MCF 10A (cell line): ENCODE measurements at regions of chr16 and their contacts with region 1.

Region 1: GRCh38 chr16:67841764-67842508 is at the start of gene THAP11:
- DNase-seq: peak; percentile 97
- H3K4me3 Mint-ChIP-seq: peak within 1 kb of the TSS; percentile 84
- H3K27ac Mint-ChIP-seq: peak within 1 kb of the TSS; percentile 86
- H3K4me1 Mint-ChIP-seq: peaks cover 16% of the 10 kb centered on the region
- H3K27me3 Mint-ChIP-seq: no peaks in the 10 kb centered on the region
- CTCF ChIP-seq: peak; percentile 85
- total RNA-seq, gene THAP11: 18.3 and 20.5 TPM in 2 replicates

Region 2: DNA sequence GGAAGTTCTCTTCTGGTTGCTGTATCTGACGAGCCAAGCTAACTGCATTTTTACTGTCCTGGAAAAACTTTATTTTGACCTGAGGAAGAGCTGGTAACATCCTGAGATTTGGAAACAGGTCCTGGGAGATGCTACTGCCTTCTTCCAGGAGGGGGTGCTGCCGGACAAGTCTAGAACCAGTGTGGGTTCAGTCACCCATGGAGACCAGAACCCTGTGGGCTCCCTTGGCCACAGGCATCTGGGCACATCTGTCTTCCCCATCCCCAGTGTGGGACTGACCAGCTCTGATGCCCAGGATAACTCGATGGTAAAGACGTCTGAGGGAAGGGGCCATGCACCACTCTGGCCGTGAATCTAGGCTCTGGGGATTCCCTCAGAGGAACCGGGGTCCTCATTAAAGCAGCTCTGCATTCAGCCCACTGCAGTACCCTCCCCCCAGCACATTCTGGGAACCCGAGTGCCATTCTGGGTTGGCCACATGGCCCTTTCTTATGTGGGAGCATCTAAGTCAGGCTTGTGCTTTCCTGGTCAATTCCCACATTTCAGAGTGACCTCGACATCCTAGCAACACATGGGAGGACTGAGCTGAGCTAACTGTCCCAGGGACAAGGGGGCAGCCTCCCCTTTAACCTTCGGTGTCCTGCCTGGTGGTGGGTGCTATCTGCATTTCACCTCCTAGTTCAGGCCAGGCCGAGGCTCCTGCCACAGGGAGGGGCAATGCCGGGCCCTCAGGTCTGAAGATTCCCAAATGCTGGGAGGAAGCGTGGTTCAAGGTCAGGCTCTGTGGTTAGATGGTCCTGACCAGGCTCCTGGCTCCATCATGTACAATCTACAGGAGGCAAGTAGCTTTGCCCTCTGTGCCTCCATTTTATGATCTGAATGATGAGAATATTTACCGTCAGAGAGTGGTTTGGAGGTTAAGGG is 168.9 kb before region 1 on chr16:
- CTCF ChIA-PET with region 1: interaction called, 3 read pairs
- POLR2A ChIA-PET with region 1: no interaction called
- intact Hi-C with region 1: loop called (anchors 10 kb)
- DNase-seq: peak; percentile 83
- H3K4me3 Mint-ChIP-seq: no peak overlapping the region
- H3K27ac Mint-ChIP-seq: peak overlapping the region; percentile 73
- H3K4me1 Mint-ChIP-seq: peaks cover 15% of the 10 kb centered on the region
- H3K27me3 Mint-ChIP-seq: no peaks in the 10 kb centered on the region
- CTCF ChIP-seq: peak; percentile 68

Region 3: GRCh38 chr16:67760206-67760955 is 81.6 kb before region 1 on chr16:
- CTCF ChIA-PET with region 1: no interaction called
- POLR2A ChIA-PET with region 1: no interaction called
- intact Hi-C with region 1: no loop called
- DNase-seq: no peak
- H3K4me3 Mint-ChIP-seq: no peak overlapping the region
- H3K27ac Mint-ChIP-seq: no peak overlapping the region
- H3K4me1 Mint-ChIP-seq: peaks cover 7% of the 10 kb centered on the region
- H3K27me3 Mint-ChIP-seq: no peaks in the 10 kb centered on the region
- CTCF ChIP-seq: no peak

Region 4: DNA sequence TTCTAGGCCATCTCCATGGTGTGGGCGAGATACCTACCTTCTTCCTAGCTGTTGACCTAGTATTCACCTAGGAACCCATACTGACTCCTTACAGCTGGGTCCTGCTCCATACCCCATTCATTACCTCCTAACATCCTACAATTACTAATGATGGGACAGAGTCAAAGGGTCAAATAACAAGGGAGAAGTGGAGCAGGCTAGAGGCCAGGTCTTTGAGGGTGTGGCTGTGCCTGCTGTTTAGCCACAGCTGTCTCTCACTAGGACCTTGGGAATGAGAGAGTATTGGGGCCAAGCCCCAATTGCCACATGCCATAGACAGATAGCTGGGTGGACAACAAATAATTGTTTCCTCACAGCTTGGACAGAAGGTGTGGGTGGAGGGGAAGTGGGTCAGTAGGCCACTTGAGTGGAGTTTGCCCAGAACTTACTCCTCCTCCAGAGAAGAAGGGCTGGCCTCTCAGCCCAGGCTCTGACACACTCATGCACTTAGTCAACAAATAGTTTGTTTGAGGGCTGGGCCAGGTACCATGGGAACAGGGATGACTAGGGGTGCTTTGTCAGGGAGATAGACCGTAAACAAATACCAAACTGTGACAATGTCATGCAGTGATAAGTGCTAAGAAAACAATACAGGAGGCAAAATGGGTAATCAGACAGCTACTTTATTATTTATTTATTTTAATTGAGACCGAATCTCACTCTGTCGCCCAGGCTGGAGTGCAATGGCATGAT is 15.7 kb after region 1 on chr16:
- CTCF ChIA-PET with region 1: interaction called, 20 read pairs
- POLR2A ChIA-PET with region 1: interaction called, 141 read pairs
- intact Hi-C with region 1: loop called (anchors 1 kb)
- DNase-seq: peak; percentile 90
- H3K4me3 Mint-ChIP-seq: peak overlapping the region; percentile 54
- H3K27ac Mint-ChIP-seq: peak overlapping the region; percentile 99
- H3K4me1 Mint-ChIP-seq: peaks cover 38% of the 10 kb centered on the region
- H3K27me3 Mint-ChIP-seq: no peaks in the 10 kb centered on the region
- CTCF ChIP-seq: no peak

Region 5: DNA sequence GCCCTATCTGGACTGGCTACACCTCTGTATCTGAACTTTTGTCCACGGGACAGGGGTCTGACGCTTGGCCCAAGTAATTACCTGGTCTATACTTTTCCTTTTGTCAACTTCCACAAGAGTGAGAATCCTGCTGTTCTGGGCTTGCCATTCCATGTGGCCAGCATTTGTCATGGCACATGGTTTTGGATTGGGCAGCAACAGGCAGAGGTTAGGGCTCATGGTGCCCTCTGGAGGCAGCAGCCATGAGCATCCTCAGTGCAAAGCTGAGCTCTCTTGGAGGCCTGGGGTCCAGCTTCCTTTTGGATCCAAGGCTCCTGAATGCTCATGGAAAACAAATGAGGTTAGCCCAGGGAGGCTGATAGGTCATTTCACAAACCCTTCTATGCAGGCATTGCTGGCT is 23.4 kb after region 1 on chr16:
- CTCF ChIA-PET with region 1: interaction called, 20 read pairs
- POLR2A ChIA-PET with region 1: interaction called, 141 read pairs
- intact Hi-C with region 1: loop called (anchors 1 kb)
- DNase-seq: peak; percentile 63
- H3K4me3 Mint-ChIP-seq: no peak overlapping the region
- H3K27ac Mint-ChIP-seq: peak overlapping the region; percentile 96
- H3K4me1 Mint-ChIP-seq: peaks cover 27% of the 10 kb centered on the region
- H3K27me3 Mint-ChIP-seq: no peaks in the 10 kb centered on the region
- CTCF ChIP-seq: peak; percentile 39

Region 6: GRCh38 chr16:67872786-67873537 is 31.0 kb after region 1 on chr16 and contains the start of gene EDC4:
- CTCF ChIA-PET with region 1: interaction called, 17 read pairs
- POLR2A ChIA-PET with region 1: interaction called, 27 read pairs
- intact Hi-C with region 1: no loop called
- DNase-seq: peak; percentile 71
- H3K4me3 Mint-ChIP-seq: peak within 1 kb of the TSS; percentile 89
- H3K27ac Mint-ChIP-seq: peak within 1 kb of the TSS; percentile 94
- H3K4me1 Mint-ChIP-seq: peaks cover 34% of the 10 kb centered on the region
- H3K27me3 Mint-ChIP-seq: no peaks in the 10 kb centered on the region
- CTCF ChIP-seq: no peak
- total RNA-seq, gene EDC4: 50.9 and 51.3 TPM in 2 replicates

Region 7: DNA sequence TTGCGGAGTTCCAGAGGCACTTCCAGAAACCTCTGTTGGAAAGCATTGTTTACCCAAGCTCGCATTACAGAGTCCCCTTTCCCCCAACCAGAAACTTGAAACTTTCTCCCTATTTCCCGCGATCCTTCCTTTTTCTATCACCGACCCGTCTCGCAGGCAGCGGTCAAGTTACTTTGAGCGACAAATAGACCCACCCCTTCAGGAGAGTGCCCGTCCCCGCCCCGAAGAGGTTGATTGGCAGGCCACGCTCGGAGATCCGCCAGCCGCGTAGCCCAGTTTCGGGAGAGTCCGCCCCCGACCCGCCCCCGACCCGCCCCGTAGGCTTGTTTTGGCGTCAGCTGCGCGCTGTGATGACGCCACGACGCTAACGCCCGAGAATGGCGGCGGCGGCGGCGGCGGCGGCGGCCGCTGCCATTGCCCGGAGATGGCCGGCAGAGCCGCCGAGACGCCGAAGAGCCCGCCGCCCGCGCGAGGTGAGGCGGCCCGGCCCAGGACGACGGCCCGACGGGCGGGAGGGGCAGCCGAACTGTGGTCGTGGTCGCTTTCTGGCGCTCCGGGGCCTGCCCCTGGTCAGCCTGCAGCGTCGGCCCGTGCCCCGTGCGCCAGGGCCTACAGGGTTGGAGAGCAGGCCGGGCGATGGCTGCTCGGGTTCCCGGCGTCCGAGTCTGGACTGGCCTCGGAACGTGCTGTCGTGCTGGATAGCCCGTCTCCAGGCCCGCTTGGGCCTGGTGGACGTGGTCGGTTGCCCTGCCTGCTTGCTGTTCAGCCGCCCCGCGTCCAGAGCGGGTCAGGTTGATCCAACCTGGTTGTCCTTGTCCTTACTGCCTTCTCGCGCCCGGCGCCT is 51.2 kb after region 1 on chr16 and contains the start of gene PSKH1:
- CTCF ChIA-PET with region 1: interaction called, 4 read pairs
- POLR2A ChIA-PET with region 1: interaction called, 34 read pairs
- intact Hi-C with region 1: no loop called
- DNase-seq: peak; percentile 96
- H3K4me3 Mint-ChIP-seq: peak within 1 kb of the TSS; percentile 92
- H3K27ac Mint-ChIP-seq: peak within 1 kb of the TSS; percentile 92
- H3K4me1 Mint-ChIP-seq: peaks cover 13% of the 10 kb centered on the region
- H3K27me3 Mint-ChIP-seq: no peaks in the 10 kb centered on the region
- CTCF ChIP-seq: no peak
- total RNA-seq, gene PSKH1: 21.7 and 27.9 TPM in 2 replicates

Region 8: DNA sequence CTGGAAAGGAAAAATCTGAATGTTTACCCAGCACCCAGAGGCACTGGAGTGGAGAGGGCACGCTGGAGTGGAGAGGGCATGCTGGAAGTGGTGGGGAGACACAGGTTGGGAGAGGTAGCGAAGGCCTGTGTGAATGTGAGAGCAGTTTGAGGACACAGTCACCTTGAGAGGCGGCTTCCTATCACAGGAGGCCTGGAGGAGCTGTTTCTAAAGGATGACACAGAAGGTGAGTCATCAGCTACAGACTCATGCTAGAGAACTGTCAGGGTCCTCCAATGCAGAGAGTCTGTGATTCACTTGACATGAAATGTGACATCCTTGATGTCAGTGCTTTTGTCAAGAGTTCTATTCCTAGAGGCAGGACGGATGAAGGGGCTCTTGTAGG is 75.9 kb after region 1 on chr16:
- CTCF ChIA-PET with region 1: interaction called, 3 read pairs
- POLR2A ChIA-PET with region 1: interaction called, 4 read pairs
- intact Hi-C with region 1: loop called (anchors 5 kb)
- DNase-seq: peak; percentile 81
- H3K4me3 Mint-ChIP-seq: no peak overlapping the region
- H3K27ac Mint-ChIP-seq: peak overlapping the region; percentile 65
- H3K4me1 Mint-ChIP-seq: peaks cover 15% of the 10 kb centered on the region
- H3K27me3 Mint-ChIP-seq: no peaks in the 10 kb centered on the region
- CTCF ChIP-seq: no peak

Region 9: DNA sequence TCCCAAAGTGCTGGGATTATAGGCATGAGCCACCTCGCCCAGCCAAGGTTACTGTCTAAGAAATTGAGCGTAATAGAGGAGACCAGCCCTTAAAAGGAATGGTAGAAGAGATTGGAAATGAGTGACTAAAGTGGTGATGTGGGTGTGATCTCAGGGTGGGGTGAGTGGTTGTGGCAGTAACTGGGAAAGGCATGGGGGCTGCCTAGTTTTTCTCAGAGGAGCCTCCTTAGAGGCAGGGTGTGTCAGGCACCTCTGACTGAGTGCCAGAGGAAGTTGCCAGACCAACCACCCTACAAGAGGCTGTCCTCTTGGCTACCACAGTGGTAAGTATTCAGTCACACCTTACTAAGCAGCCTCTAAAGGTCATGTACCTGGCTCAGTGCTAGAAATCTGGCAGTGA is 190.0 kb after region 1 on chr16:
- CTCF ChIA-PET with region 1: no interaction called
- POLR2A ChIA-PET with region 1: no interaction called
- intact Hi-C with region 1: no loop called
- DNase-seq: peak; percentile 69
- H3K4me3 Mint-ChIP-seq: no peak overlapping the region
- H3K27ac Mint-ChIP-seq: peak overlapping the region; percentile 89
- H3K4me1 Mint-ChIP-seq: peaks cover 22% of the 10 kb centered on the region
- H3K27me3 Mint-ChIP-seq: no peaks in the 10 kb centered on the region
- CTCF ChIP-seq: no peak